RWPE1 (cell line): ENCODE measurements at regions of chr2 and their contacts with region 1.

Region 1: DNA sequence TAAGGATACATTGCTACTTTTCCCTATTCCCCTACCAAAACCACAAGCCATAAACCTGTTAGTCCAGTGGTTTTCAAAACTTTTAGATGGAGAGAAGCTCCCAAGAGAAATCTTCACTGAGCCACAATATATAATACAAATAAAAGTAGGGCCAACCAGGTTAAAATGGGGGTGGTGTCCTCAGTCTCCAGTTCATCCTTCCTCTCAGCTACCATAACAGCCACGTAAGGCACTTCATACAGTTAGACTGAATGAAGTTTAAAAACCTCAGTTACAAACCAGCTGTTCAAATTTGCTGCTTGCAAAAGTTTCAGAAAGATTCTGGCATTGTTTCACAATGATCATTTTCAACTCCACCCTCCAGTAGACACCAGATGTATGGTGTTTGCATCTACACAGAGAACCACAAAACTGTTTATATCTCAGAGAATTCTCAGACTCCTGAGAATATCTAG is 26.0 kb downstream of the SOS1 start:
- DNase-seq: no peak
- H3K27ac ChIP-seq: no peak overlapping the region
- CTCF ChIP-seq: no peak

Region 2: GRCh38 chr2:38245114-38245641 is 849.7 kb before region 1 on chr2:
- CTCF ChIA-PET with region 1: no interaction called
- POLR2A ChIA-PET with region 1: no interaction called
- DNase-seq: peak; percentile 13
- H3K27ac ChIP-seq: no peak overlapping the region
- CTCF ChIP-seq: no peak

Region 3: GRCh38 chr2:39068299-39069135 is 26.4 kb before region 1 on chr2:
- CTCF ChIA-PET with region 1: interaction called, 10 read pairs
- POLR2A ChIA-PET with region 1: no interaction called
- DNase-seq: peak; percentile 55
- H3K27ac ChIP-seq: peak overlapping the region; percentile 63
- CTCF ChIP-seq: no peak

Region 4: GRCh38 chr2:39080152-39080551 is 14.7 kb before region 1 on chr2:
- CTCF ChIA-PET with region 1: interaction called, 12 read pairs
- POLR2A ChIA-PET with region 1: no interaction called
- DNase-seq: no peak
- H3K27ac ChIP-seq: no peak overlapping the region
- CTCF ChIP-seq: no peak

Region 5: DNA sequence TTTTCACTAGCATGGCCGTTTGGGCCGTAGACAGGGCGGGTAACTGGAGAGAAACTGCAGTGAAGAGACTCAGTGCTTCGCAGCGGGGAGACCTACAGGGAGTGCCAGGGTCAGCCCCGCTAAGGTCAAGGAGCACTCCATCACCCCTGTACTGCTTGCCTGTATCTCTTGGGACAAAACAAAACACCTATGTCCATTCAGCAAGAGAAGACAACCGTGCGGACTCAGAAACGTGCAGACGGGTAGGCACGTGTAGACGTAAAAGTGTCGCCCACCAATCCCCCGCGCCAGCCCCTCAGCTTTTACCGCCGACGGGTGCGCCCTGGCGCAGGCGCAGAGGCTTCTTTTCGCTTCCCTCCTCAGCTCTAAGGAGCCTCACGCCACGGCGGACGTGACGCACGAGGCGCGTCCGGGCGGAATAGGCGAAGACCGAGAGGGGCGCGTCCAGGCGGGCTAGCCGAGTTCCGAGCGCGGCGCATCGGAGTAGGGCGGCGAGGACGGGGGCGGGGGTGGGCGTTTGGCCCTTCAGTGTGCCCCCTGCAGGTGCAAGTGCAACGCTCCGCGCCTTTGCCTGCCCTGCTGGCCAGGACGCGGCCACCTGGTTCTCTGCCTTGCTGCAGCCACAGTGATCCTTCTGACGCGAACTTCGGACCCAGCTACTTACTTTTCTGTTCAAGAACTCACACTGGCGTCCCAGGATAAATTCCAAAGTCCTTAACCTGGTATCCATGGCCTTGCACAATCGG is 29.3 kb after region 1 on chr2:
- CTCF ChIA-PET with region 1: interaction called, 10 read pairs
- POLR2A ChIA-PET with region 1: interaction called, 5 read pairs
- DNase-seq: peak; percentile 86
- H3K27ac ChIP-seq: peak overlapping the region; percentile 86
- CTCF ChIP-seq: peak; percentile 61

Region 6: DNA sequence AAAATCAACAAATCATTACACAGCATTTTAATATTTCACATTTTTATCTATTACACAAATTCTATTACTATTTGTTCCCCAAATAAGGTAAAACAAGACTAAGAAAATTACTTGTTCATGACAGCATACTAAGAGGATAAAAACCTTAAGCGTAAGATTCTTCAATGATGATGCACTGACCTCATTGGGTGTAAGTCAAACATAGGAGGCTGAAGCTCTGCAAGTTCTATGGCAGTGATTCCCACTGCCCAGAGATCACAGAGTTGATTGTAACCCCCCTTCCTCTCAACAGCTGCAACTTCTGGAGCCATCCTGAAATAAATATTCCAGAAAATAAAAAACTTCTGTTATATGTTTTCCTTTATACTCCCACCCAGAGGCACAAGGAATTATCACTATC is 231.1 kb after region 1 on chr2:
- CTCF ChIA-PET with region 1: no interaction called
- POLR2A ChIA-PET with region 1: no interaction called
- DNase-seq: no peak
- H3K27ac ChIP-seq: no peak overlapping the region
- CTCF ChIP-seq: no peak